Astrocyte of the cerebellum (primary cell): ENCODE measurements at regions of chr17 and their contacts with region 1.

Region 1: DNA sequence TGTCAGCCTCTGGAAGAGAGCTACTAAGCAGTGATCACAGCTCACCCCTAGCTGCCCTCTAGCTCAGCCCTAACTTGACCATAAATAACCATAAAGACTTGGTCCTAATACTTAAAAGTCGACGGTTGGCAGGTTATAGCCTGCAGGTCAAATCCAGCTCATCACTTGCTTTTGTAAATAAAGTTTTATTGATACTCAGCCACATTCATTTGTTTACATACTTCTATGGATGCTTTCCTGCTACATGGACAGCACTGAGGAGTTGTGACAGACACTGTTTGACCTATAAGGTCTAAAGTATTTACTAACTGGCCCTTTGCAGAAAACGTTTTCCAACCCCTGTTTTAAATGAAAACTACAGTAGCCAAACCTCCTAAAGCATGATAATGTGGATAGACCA is 151.6 kb upstream of the ASIC2 start:
- DNase-seq: no peak
- H3K4me3 ChIP-seq: no peak overlapping the region
- CTCF ChIP-seq: no peak

Region 2: GRCh38 chr17:33363475-33363874 is 81.3 kb before region 1 on chr17:
- in situ Hi-C with region 1: loop called (anchors 5 kb)
- DNase-seq: no peak
- H3K4me3 ChIP-seq: no peak overlapping the region
- CTCF ChIP-seq: no peak

Region 3: DNA sequence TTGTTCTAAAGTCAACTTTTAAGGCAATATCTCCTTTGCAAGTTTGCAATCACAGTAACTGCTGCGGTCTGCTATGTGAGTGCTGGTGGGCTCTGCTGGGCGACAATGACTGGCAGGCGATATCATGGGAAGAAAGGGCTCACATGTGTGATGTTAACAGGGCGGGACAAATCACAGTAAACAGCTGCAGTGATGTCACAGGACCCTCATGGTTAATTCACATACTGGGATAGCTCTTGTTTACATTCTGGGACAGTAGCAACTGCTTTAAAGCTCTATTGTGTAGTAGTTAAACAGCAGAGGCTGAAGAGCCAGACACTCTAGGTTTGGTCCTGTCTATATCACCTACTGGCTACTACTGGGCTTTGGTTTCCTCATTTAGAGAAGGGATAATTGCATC is 105.5 kb after region 1 on chr17:
- in situ Hi-C with region 1: no loop called
- DNase-seq: no peak
- H3K4me3 ChIP-seq: no peak overlapping the region
- CTCF ChIP-seq: no peak